Panc1 (cell line): ENCODE measurements at regions of chr5 and their contacts with region 1.

Region 1: DNA sequence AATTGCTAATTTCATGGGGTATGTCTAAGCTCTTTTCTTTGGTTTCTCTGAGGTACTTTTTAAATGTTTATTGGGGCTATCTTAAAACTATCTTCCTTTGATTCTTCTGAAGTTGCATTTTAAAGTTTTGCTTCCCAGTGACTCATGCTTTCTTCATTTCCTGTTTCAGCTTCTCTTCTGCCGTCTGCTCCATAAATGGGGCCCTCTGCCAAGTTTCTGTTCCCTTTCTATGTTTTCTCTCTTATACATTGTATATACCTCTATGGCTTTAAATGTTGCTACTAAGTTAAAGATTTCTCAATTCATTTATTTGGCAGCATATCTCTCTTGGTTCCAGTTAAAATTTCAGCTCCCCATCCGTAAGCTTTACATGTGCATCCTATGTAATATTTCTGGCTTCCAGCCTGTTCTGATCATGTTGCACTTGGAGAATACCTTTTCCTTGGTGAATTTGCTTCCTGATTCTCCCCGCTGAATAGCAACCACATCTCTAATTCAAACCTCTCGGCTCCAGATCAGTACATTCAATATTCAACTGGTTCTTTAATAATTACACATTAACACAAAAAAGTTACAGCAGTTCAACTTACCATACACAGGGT is 125.3 kb downstream of the ST8SIA4 start:
- DNase-seq: no peak
- ATAC-seq: no peak
- H3K4me3 ChIP-seq: no peak overlapping the region
- H3K27ac ChIP-seq: no peak overlapping the region
- H3K4me1 ChIP-seq: no peaks in the 10 kb centered on the region
- H3K27me3 ChIP-seq: no peaks in the 10 kb centered on the region
- CTCF ChIP-seq: no peak

Region 2: GRCh38 chr5:100790170-100790665 is 12.4 kb after region 1 on chr5:
- CTCF ChIA-PET with region 1: no interaction called
- POLR2A ChIA-PET with region 1: no interaction called
- in situ Hi-C with region 1: no loop called
- intact Hi-C with region 1: no loop called
- DNase-seq: no peak
- ATAC-seq: no peak; the same call in 1 of the 2 replicates
- H3K4me3 ChIP-seq: no peak overlapping the region
- H3K27ac ChIP-seq: no peak overlapping the region
- H3K4me1 ChIP-seq: no peaks in the 10 kb centered on the region
- H3K27me3 ChIP-seq: no peaks in the 10 kb centered on the region
- CTCF ChIP-seq: peak; percentile 36

Region 3: DNA sequence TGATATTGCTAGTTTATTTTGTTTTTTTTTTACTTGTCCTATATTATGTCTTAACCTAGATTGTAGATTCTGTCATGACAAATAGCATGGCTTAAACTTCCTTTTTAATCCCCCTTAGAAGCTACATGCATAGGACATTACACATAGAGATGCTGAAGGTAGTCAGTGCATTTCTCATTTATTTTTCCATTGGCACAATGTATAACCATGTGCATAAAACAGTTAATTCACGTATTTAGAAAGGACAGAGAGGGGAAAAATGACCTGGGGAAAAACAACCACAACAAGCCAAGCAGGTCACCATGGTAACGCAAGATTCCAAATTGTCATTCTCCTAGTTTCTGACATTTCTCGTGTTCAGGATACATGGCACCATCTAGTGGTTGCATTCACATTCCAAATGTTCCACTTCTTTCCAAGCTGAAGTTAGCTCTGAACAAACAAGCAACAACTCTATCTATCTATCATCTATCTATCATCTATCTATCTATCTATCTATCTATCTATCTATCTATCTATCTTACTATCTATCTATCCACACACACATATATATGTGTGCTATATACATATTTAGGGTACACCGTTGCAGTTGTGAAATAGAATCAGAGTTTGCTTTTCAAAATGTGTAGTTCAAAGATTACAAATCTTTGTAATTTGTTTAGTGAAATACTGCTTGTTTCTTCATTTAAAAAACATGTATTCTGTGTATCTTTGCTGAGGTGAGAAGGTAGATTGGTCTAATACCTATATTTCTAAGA is 612.5 kb after region 1 on chr5:
- CTCF ChIA-PET with region 1: no interaction called
- POLR2A ChIA-PET with region 1: no interaction called
- in situ Hi-C with region 1: no loop called
- intact Hi-C with region 1: loop called (anchors 10 kb)
- DNase-seq: peak; percentile 41
- ATAC-seq: no peak
- H3K4me3 ChIP-seq: no peak overlapping the region
- H3K27ac ChIP-seq: no peak overlapping the region
- H3K4me1 ChIP-seq: no peaks in the 10 kb centered on the region
- H3K27me3 ChIP-seq: no peaks in the 10 kb centered on the region
- CTCF ChIP-seq: peak; percentile 68; the same call in 1 of the 2 replicates